ENCODE measurements at regions of chr16 and their contacts with region 1.

Region 1: GRCh38 chr16:4402439-4403132 is 13.8 kb downstream of the CORO7 start:
- DNase-seq: peak; percentile 84
- H3K4me3 ChIP-seq: no peak overlapping the region
- H3K27ac ChIP-seq: no peak overlapping the region
- H3K4me1 ChIP-seq: peaks cover under 1% of the 10 kb centered on the region
- H3K27me3 ChIP-seq: no peaks in the 10 kb centered on the region
- CTCF ChIP-seq: peak; percentile 83 to 92 (median 89)
- POLR2A ChIP-seq: no peak

Region 2: DNA sequence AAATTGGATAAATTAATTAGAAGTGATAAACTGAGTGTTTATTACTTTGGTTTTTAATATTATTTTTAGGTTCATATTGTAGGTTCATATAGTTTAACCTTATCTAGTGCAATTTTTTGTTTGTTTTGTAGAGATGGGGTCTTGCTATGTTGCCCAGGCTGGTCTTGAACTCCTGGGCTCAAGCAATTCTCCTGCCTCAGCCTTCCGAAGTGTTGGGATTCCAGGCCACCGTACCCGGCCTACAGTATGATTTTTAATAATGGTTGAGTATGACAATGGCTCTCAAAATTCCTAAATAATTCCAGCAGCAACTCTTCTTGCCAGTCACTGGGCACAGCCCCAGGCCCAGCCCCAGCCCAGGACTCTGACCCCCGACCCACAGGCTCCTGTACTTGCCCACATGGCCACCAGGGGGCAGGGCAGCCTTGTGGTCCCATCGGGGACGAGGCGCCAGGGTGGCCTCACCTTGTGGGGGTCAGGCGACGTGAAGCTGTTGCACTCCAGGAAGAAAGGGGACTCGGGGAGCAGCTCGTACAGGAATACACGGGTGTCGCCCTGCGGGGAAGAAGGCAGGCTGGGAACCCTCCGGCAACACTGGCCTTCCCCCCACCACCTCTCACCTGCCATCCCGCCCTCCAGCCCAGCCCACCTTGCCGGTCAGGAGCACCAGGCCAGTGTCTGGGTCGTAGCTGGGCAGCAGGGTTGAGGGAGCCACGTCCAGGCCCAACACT is 43.6 kb before region 1 on chr16:
- intact Hi-C with region 1: loop called (anchors 5 kb)
- DNase-seq: peak; percentile 71
- H3K4me3 ChIP-seq: no peak overlapping the region
- H3K27ac ChIP-seq: no peak overlapping the region
- H3K4me1 ChIP-seq: no peaks in the 10 kb centered on the region
- H3K27me3 ChIP-seq: no peaks in the 10 kb centered on the region
- CTCF ChIP-seq: peak; percentile 90 to 97 (median 97)
- POLR2A ChIP-seq: no peak

Measured in testis (tissue), 5 donors.